ENCODE measurements at regions of chr22 and their contacts with region 1.

Region 1: DNA sequence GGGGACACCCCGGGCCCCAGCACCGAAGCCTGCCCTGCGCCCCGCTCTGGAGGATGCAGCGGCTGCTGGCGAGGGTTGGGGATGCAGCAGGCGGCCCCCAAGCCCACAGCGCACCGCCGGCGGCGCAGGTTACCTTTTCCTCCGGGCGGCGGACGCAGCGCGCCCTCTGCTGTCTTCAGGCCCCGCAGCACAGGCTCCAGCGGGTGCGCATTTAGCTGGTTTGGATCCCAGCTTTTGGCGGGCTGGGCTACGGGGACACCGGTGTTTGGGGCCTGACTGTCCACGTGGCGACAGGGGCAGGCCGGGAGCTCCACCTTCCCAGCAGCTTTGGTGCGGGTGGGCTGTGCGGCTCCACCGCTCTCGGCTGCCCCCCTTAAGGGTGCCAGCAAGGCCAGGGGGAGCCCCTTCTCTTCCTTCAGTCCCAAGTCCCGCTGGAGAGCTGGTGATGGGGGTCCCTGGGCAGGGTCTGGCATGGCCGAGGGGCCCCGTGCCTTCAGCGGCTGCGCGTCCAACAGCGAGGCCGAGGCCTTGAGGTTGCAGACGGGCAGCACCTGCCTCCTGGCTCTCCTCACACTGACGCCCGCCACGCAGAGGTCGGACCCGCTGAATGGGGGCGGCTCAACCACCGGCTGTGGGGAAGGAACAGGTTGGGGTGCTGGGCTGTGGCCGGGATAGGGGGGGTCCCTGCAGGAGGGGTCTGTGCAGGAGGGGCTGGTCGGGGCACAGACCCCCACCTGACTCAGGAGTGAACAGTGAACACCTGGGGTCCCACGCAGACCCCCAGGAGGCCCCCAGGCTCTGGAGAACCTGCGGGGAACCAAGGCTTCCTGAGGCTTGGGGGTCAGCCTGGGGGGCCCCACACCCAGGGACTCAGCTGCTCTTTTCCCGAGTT is 18.0 kb upstream of the IL17REL start:
- DNase-seq: peak; percentile 55
- H3K4me3 ChIP-seq: no peak overlapping the region
- H3K27ac ChIP-seq: no peak overlapping the region
- H3K4me1 ChIP-seq: no peaks in the 10 kb centered on the region
- H3K27me3 ChIP-seq: no peaks in the 10 kb centered on the region
- CTCF ChIP-seq: peak; percentile 86 to 95
- POLR2A ChIP-seq: no peak

Region 2: GRCh38 chr22:49735411-49735900 is 295.1 kb before region 1 on chr22:
- CTCF ChIA-PET with region 1: no interaction called
- POLR2A ChIA-PET with region 1: no interaction called
- dilution Hi-C with region 1: no loop called
- intact Hi-C with region 1: no loop called
- DNase-seq: peak; percentile 8
- H3K4me3 ChIP-seq: no peak overlapping the region
- H3K27ac ChIP-seq: no peak overlapping the region
- H3K4me1 ChIP-seq: no peaks in the 10 kb centered on the region
- H3K27me3 ChIP-seq: no peaks in the 10 kb centered on the region
- CTCF ChIP-seq: no peak
- POLR2A ChIP-seq: no peak

Region 3: GRCh38 chr22:49767355-49768062 is 263.0 kb before region 1 on chr22:
- CTCF ChIA-PET with region 1: interaction called, 26 read pairs
- POLR2A ChIA-PET with region 1: no interaction called
- dilution Hi-C with region 1: no loop called
- intact Hi-C with region 1: loop called (anchors 5 kb)
- DNase-seq: peak; percentile 64
- H3K4me3 ChIP-seq: no peak overlapping the region
- H3K27ac ChIP-seq: no peak overlapping the region
- H3K4me1 ChIP-seq: no peaks in the 10 kb centered on the region
- H3K27me3 ChIP-seq: no peaks in the 10 kb centered on the region
- CTCF ChIP-seq: peak; percentile 60 to 64
- POLR2A ChIP-seq: no peak

Region 4: DNA sequence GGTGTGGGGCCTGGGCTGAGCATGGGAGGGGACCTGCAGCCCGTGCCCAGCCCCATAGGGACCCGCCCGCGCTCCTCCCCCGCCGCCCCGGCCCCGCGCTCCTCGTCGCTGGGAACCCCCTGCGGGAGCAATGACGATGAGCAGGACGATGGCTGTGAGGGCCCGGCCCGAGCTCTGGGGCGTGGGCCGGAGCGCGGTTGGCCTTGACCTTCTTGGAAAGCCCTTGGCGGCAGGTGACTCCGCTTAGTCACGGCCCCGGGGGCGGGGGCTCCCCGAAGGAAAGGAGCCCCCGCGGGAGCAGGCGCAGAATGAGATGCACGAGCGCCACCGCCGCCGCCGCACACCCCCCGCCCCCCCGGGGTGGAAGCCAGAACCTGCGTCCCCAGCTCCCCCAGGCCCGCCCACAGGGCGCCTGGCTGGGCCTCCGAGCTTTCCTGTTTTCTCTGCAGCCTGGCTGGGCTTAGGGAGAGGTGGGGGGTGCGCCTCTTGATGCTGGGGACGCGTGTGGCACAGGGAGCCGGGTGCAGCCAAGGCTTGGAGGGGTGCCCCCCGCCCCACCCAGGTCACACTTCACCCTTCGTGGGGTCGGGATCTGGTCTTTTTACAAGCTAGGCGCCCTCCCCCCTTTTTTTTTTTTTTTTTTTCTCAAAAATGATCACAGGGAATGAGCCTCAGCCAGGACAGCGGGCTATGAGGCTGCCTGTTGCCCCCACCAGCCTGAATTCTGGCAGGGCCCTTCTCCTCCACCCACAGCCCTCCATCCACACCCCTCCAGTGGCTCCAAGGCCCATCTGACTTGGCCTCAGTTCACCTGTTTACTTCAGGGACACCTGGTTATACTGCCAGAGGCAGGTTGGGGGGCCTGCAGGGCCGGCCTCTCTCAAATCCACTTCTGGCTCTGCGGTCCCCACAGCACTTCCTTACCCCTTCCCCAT is 94.3 kb before region 1 on chr22:
- CTCF ChIA-PET with region 1: interaction called, 174 read pairs
- POLR2A ChIA-PET with region 1: interaction called, 6 read pairs
- dilution Hi-C with region 1: no loop called
- intact Hi-C with region 1: loop called (anchors 1 kb)
- DNase-seq: peak; percentile 97
- H3K4me3 ChIP-seq: peak overlapping the region in 1 of 3 experiments; percentile 13
- H3K27ac ChIP-seq: peak overlapping the region; percentile 85
- H3K4me1 ChIP-seq: peaks cover 56% of the 10 kb centered on the region
- H3K27me3 ChIP-seq: no peaks in the 10 kb centered on the region
- CTCF ChIP-seq: no peak
- POLR2A ChIP-seq: peak; percentile 52

Region 5: DNA sequence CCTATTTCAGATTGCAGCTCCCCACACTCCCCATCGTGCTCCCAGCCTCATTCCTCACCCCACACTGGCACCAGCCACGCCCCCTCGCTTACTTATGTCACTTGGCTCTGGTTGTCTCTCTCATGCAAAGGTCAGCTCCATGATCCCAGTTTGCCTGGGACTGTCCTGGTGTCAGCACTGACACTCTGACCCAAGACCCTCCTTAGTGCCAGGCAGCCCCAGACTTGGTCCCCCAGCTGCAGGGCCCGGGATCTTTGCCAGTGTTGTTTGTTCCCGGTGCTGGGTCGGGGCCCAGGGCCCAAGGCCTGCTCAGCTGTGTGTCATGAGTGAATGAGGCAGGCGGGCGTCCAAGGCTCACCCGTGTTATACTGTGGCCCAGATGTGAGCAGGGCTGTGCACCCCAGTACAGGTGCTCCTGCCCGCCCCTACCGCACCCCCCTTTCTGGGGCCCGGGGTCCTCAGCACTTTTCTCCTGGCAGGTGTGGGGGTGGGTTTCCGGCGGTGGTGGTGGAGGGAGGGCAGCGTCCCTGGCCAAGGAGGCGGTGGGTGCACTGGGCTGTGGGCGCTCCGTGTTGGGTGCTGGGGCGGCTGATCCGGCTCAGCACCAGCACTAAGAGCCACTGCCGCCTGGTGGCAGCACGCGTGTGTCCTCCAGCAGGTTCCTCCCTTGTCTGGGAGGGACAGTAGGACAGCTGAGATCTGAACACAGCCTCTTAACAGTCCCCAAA is 37.5 kb before region 1 on chr22:
- CTCF ChIA-PET with region 1: interaction called, 50 read pairs
- POLR2A ChIA-PET with region 1: no interaction called
- dilution Hi-C with region 1: no loop called
- intact Hi-C with region 1: loop called (anchors 5 kb)
- DNase-seq: peak; percentile 43
- H3K4me3 ChIP-seq: no peak overlapping the region
- H3K27ac ChIP-seq: no peak overlapping the region
- H3K4me1 ChIP-seq: no peaks in the 10 kb centered on the region
- H3K27me3 ChIP-seq: peaks cover 0 to 1% of the 10 kb centered on the region in 2 experiments
- CTCF ChIP-seq: peak; percentile 72 to 84
- POLR2A ChIP-seq: no peak

Region 6: GRCh38 chr22:50049299-50050081 is 18.9 kb after region 1 on chr22:
- CTCF ChIA-PET with region 1: interaction called, 13 read pairs
- POLR2A ChIA-PET with region 1: no interaction called
- dilution Hi-C with region 1: no loop called
- intact Hi-C with region 1: no loop called
- DNase-seq: no peak
- H3K4me3 ChIP-seq: no peak overlapping the region
- H3K27ac ChIP-seq: no peak overlapping the region
- H3K4me1 ChIP-seq: no peaks in the 10 kb centered on the region
- H3K27me3 ChIP-seq: no peaks in the 10 kb centered on the region
- CTCF ChIP-seq: no peak
- POLR2A ChIP-seq: no peak

Region 7: GRCh38 chr22:50209893-50210292 is 179.3 kb after region 1 on chr22:
- CTCF ChIA-PET with region 1: interaction called, 6 read pairs
- POLR2A ChIA-PET with region 1: no interaction called
- dilution Hi-C with region 1: no loop called
- intact Hi-C with region 1: loop called (anchors 1 kb)
- DNase-seq: peak; percentile 56
- H3K4me3 ChIP-seq: no peak overlapping the region
- H3K27ac ChIP-seq: no peak overlapping the region
- H3K4me1 ChIP-seq: peaks cover 13% of the 10 kb centered on the region
- H3K27me3 ChIP-seq: no peaks in the 10 kb centered on the region
- CTCF ChIP-seq: peak; percentile 84 to 87
- POLR2A ChIP-seq: no peak

Measured in endothelial cell of umbilical vein (primary cell).